GM12878 (cell line): ENCODE measurements at regions of chrX and their contacts with region 1.

Region 1: GRCh38 chrX:30713061-30713525 is 59.9 kb downstream of the GK start:
- DNase-seq: peak; percentile 85
- ATAC-seq: peak; percentile 94
- H3K4me3 ChIP-seq: no peak overlapping the region
- H3K27ac ChIP-seq: peak overlapping the region; percentile 51
- H3K4me1 ChIP-seq: peaks cover 13% of the 10 kb centered on the region
- H3K27me3 ChIP-seq: no peaks in the 10 kb centered on the region
- CTCF ChIP-seq: peak; percentile 27 to 40 (median 31); a peak in 5 of 6 replicates
- EP300 ChIP-seq: peak; percentile 95 to 97
- POLR2A ChIP-seq: no peak
- RAD21 ChIP-seq: peak; percentile 46; the same call in 1 of the 2 replicates

Region 2: GRCh38 chrX:30577362-30577991 is 135.6 kb before region 1 on chrX and contains the start of gene TASL:
- CTCF ChIA-PET with region 1: interaction called, 4 read pairs
- POLR2A ChIA-PET with region 1: no interaction called
- RAD21 ChIA-PET with region 1: interaction called, 4 read pairs
- SMC1A ChIA-PET with region 1: interaction called, 11 read pairs
- in situ Hi-C with region 1: loop called (anchors 5 kb)
- intact Hi-C with region 1: loop called (anchors 2 kb)
- DNase-seq: peak; percentile 94
- ATAC-seq: peak; percentile 83
- H3K4me3 ChIP-seq: peak within 1 kb of the TSS; percentile 98
- H3K27ac ChIP-seq: peak within 1 kb of the TSS; percentile 99
- H3K4me1 ChIP-seq: peaks cover 16% of the 10 kb centered on the region
- H3K27me3 ChIP-seq: no peaks in the 10 kb centered on the region
- CTCF ChIP-seq: no peak
- EP300 ChIP-seq: peak; percentile 94 to 96
- POLR2A ChIP-seq: peak; percentile 60
- RAD21 ChIP-seq: no peak
- polyA plus RNA-seq, gene TASL: 18.2 to 19.4 TPM

Region 3: GRCh38 chrX:30593435-30594200 is 119.5 kb before region 1 on chrX:
- CTCF ChIA-PET with region 1: interaction called, 3 read pairs
- POLR2A ChIA-PET with region 1: interaction called, 3 read pairs
- RAD21 ChIA-PET with region 1: no interaction called
- SMC1A ChIA-PET with region 1: no interaction called
- in situ Hi-C with region 1: no loop called
- intact Hi-C with region 1: loop called (anchors 5 kb)
- DNase-seq: no peak
- ATAC-seq: peak; percentile 72
- H3K4me3 ChIP-seq: no peak overlapping the region
- H3K27ac ChIP-seq: peak overlapping the region; percentile 64
- H3K4me1 ChIP-seq: peaks cover 53% of the 10 kb centered on the region
- H3K27me3 ChIP-seq: no peaks in the 10 kb centered on the region
- CTCF ChIP-seq: peak; percentile 28 to 57 (median 31); a peak in 4 of 6 replicates
- EP300 ChIP-seq: no peak
- POLR2A ChIP-seq: no peak
- RAD21 ChIP-seq: peak; percentile 73

Region 4: DNA sequence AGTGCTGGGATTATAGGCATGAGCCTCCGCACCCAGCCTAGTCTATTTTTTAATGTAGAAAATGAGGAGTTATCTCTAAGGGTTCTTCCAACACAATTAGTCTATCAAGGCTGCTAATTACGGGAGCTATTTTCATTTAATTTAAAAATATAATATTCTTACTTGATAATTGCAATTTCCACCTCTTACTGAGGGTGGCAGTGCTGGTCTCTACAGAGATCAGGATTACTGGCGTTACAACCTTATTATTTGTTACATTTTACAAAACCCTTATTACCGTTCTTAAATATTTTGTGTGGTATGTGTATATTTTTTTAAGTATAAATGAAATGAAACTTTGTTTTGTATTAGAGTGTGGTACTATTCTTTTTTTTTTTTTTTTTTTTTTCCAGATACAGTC is 77.5 kb before region 1 on chrX:
- CTCF ChIA-PET with region 1: interaction called, 17 read pairs
- POLR2A ChIA-PET with region 1: no interaction called
- RAD21 ChIA-PET with region 1: interaction called, 5 read pairs
- SMC1A ChIA-PET with region 1: interaction called, 6 read pairs
- in situ Hi-C with region 1: no loop called
- intact Hi-C with region 1: loop called (anchors 5 kb)
- DNase-seq: no peak
- ATAC-seq: peak; percentile 42; the same call in 2 of the 3 replicates
- H3K4me3 ChIP-seq: no peak overlapping the region
- H3K27ac ChIP-seq: no peak overlapping the region
- H3K4me1 ChIP-seq: no peaks in the 10 kb centered on the region
- H3K27me3 ChIP-seq: no peaks in the 10 kb centered on the region
- CTCF ChIP-seq: peak; percentile 27 to 43 (median 36); a peak in 4 of 6 replicates
- EP300 ChIP-seq: no peak
- POLR2A ChIP-seq: no peak
- RAD21 ChIP-seq: peak; percentile 55

Region 5: DNA sequence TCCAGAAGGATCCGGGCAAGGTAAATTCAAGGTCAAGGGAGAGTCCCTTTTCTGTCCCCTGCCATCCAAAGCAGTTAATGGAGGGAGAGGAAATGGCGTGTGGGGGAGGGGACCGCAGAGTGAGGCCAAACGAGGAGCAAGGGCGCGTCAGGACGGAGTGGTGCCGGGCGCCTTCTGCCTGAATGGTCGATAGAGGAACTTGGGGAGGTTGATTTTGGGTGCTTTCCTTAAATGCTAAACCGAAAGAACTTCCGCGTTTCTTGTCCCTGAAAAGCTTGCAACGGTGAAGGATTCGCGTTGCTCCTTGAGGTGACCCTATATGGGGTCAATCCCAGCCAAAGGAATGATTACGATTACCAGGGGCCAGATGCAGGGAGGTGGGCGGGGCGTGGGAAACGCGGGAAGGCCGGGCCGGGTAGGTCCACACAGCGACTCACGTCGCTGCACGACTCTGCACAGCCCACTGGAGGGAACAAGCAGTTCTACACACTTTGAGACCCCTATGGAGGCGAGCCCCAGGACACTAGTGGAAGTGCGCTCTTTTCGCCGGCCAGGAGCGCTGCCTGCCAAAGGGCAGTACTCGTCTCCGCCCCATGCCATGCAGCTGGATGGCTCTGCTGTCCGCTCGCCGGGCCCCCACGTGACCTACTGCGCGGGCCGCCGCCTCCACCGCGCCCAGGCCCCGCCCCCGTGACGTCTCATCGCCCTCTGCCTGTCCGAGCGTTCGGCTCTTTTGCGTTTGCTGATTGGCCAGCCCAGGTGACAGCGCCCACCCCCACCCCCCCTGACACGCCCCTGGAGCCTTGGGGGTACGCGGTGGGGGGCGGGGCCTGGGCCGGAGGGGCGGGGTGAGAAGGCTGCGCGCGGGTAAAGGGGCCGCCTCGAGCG is 60.3 kb before region 1 on chrX:
- CTCF ChIA-PET with region 1: no interaction called
- POLR2A ChIA-PET with region 1: no interaction called
- RAD21 ChIA-PET with region 1: interaction called, 3 read pairs
- SMC1A ChIA-PET with region 1: interaction called, 3 read pairs
- in situ Hi-C with region 1: no loop called
- intact Hi-C with region 1: loop called (anchors 1 kb)
- DNase-seq: peak; percentile 64
- ATAC-seq: peak; percentile 87
- H3K4me3 ChIP-seq: peak overlapping the region; percentile 51; the same call in 1 of the 2 replicates
- H3K27ac ChIP-seq: peak overlapping the region; percentile 83
- H3K4me1 ChIP-seq: no peaks in the 10 kb centered on the region; the same call in 1 of the 2 replicates
- H3K27me3 ChIP-seq: no peaks in the 10 kb centered on the region
- CTCF ChIP-seq: no peak
- EP300 ChIP-seq: no peak
- POLR2A ChIP-seq: peak; percentile 84
- RAD21 ChIP-seq: no peak